Endothelial cell of umbilical vein (primary cell): ENCODE measurements at regions of chr2 and their contacts with region 1.

Region 1: DNA sequence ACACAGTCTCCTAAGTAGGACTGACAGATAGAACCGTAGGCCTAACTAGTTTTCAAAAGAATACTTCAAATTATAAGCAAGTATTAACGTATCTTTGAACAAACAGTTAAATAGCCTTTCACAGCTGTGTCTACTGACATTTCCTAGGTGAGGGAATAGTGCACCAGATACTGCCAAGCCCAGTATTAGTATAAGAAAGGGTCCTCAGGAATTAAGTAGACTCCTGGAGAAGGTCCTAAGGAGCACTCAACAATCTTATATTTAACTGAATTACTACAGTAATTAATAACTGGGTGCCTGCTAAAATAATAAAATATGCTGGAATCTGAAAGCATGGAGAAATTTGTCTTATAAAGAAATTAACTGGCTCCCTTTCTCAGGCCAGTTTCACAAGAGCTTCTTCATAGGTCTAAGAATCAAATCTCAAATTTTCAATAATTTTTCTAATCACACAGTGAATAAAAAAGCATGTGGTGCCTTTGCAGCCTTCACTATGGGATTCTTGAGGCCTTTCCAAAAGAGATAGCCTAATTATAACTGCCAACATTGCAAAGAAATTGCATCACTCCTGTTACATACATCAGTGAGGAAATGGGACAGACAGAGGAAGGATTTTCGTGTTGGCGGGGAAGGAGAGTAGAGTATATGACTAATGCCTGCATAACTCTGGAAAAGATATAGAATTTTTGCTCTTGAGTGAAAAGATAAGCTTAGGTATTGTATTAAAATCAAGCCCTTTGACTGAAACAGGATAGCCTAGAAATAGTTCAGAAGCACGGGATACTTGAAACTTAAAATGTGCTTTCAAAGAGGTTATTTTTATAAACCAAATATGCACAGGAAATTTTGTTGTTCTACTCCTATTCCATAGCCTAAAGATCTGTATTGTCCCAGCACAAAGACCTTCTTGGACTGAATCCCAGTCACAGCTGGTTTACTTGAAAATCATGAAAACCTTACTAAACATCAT is 228.6 kb upstream of the STK17B start:
- DNase-seq: peak; percentile 97
- H3K4me3 ChIP-seq: no peak overlapping the region
- H3K27ac ChIP-seq: peak overlapping the region; percentile 94
- H3K4me1 ChIP-seq: peaks cover 58% of the 10 kb centered on the region
- H3K27me3 ChIP-seq: no peaks in the 10 kb centered on the region
- CTCF ChIP-seq: no peak
- POLR2A ChIP-seq: peak; percentile 66

Region 2: GRCh38 chr2:196233021-196233804 is 166.8 kb before region 1 on chr2:
- CTCF ChIA-PET with region 1: no interaction called
- POLR2A ChIA-PET with region 1: no interaction called
- dilution Hi-C with region 1: no loop called
- intact Hi-C with region 1: loop called (anchors 1 kb)
- DNase-seq: peak; percentile 93
- H3K4me3 ChIP-seq: peak overlapping the region in 1 of 3 experiments; percentile 2
- H3K27ac ChIP-seq: peak overlapping the region; percentile 96
- H3K4me1 ChIP-seq: peaks cover 32% of the 10 kb centered on the region
- H3K27me3 ChIP-seq: no peaks in the 10 kb centered on the region
- CTCF ChIP-seq: no peak
- POLR2A ChIP-seq: no peak

Region 3: GRCh38 chr2:196331143-196331542 is 68.9 kb before region 1 on chr2:
- CTCF ChIA-PET with region 1: interaction called, 23 read pairs
- POLR2A ChIA-PET with region 1: no interaction called
- dilution Hi-C with region 1: no loop called
- intact Hi-C with region 1: loop called (anchors 1 kb)
- DNase-seq: peak; percentile 84
- H3K4me3 ChIP-seq: peak overlapping the region in 1 of 3 experiments; percentile 26
- H3K27ac ChIP-seq: peak overlapping the region; percentile 85
- H3K4me1 ChIP-seq: peaks cover 46% of the 10 kb centered on the region
- H3K27me3 ChIP-seq: no peaks in the 10 kb centered on the region
- CTCF ChIP-seq: no peak
- POLR2A ChIP-seq: no peak

Region 4: DNA sequence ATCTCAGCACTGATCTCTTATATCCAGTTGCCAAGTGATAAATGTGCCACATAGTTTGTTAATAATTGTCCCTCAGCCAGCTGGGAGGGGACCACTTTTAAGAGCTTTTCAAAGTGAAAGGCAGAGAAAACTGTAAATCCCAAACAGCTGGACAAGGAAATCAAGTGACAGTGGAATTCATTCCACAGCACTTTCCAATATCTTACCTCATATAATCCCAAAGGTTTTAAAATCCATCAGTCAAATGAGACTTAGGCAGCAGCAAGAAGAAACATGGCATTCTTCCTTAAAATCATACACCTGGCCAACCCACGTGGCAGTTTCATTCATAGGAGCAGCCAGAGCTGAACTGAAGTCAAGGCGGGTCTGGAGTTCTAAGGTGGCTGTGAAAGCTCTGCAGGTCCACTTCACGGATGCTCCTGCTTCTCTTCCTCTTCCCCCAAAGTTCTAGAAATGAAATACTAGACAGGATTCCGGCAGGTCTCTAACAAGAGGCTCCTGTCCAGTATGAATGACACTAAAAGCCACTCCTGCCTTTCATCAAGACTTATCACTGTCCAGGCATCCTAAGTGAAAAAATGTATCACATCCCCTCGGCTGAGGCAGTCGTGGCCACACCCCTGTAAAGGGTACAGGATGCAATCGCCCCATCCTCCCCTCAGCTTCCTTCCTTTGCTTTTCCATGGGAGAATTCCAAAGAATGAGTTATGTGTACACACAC is 38.2 kb before region 1 on chr2:
- CTCF ChIA-PET with region 1: interaction called, 7 read pairs
- POLR2A ChIA-PET with region 1: interaction called, 14 read pairs
- dilution Hi-C with region 1: no loop called
- intact Hi-C with region 1: loop called (anchors 1 kb)
- DNase-seq: peak; percentile 85
- H3K4me3 ChIP-seq: peak overlapping the region; percentile 34 to 94 (median 57)
- H3K27ac ChIP-seq: peak overlapping the region; percentile 73
- H3K4me1 ChIP-seq: peaks cover 58% of the 10 kb centered on the region
- H3K27me3 ChIP-seq: no peaks in the 10 kb centered on the region
- CTCF ChIP-seq: no peak
- POLR2A ChIP-seq: peak; percentile 80

Region 5: DNA sequence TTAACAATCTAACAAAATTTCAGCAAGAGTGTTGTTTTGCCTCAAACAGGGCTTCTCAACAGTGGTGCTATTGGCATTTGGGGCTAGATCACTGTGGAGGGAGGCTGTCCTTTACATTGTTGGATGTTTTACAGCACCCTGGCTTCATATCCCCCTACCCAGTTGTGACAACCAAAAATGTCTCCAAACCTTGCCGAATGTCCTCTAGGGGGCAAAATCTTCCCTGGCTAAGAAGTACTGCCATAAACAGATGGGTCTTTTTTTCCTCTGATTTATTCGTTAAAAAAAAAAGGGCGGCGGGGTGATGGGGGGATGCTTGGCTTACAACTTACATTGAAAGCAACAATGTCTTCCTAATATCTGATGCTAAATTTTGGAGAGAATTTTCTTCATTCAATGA is 31.9 kb after region 1 on chr2:
- CTCF ChIA-PET with region 1: interaction called, 6 read pairs
- POLR2A ChIA-PET with region 1: no interaction called
- dilution Hi-C with region 1: no loop called
- intact Hi-C with region 1: loop called (anchors 1 kb)
- DNase-seq: peak; percentile 28
- H3K4me3 ChIP-seq: no peak overlapping the region
- H3K27ac ChIP-seq: no peak overlapping the region
- H3K4me1 ChIP-seq: peaks cover 55% of the 10 kb centered on the region
- H3K27me3 ChIP-seq: no peaks in the 10 kb centered on the region
- CTCF ChIP-seq: peak; percentile 29 to 38
- POLR2A ChIP-seq: no peak

Region 6: DNA sequence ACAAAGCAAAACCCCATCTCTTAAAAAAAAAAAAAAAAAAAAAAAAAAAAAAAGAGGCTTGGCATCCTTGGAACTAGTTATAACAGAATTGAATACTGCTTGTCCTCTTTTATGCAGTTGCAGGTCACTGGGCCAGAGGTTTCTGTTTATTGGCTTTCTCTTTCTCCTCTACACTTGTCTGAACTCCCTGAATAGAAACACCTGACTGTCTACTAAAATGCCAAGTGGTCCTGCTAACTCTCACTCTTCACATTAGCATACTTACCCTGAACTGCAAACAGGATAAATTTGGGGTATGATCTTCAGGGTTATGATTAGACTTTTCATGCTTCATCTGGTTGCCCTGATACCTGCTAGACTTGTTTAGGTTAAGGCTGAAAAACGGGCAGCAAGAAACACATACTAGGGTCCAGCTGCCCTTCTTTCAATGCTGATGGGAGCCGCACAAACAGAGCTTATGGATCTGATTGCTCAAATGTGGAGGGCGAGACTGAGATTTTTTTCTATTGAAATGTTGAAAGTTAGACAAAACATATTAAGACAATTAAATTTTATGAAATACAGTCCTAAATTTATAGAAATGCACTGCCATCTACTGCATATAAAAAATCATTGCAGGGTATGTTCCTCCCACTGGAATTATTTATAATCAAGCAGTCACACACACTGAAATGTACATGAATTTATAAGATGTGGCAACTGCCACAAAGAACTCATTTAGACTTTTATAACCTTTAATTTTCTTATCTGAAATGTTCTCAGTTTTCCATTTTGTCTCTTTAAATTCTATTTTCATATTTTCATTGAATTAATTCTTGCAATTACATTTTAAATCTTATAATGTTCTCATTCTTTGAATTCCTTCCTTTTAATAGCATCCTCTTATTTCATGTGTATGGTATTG is 358.7 kb after region 1 on chr2:
- CTCF ChIA-PET with region 1: no interaction called
- POLR2A ChIA-PET with region 1: no interaction called
- dilution Hi-C with region 1: no loop called
- intact Hi-C with region 1: loop called (anchors 1 kb)
- DNase-seq: peak; percentile 40
- H3K4me3 ChIP-seq: no peak overlapping the region
- H3K27ac ChIP-seq: no peak overlapping the region
- H3K4me1 ChIP-seq: no peaks in the 10 kb centered on the region
- H3K27me3 ChIP-seq: no peaks in the 10 kb centered on the region
- CTCF ChIP-seq: peak in 1 of 2 donors; percentile 26
- POLR2A ChIP-seq: no peak